ENCODE measurements at regions of chr6 and their contacts with region 1.

Region 1: DNA sequence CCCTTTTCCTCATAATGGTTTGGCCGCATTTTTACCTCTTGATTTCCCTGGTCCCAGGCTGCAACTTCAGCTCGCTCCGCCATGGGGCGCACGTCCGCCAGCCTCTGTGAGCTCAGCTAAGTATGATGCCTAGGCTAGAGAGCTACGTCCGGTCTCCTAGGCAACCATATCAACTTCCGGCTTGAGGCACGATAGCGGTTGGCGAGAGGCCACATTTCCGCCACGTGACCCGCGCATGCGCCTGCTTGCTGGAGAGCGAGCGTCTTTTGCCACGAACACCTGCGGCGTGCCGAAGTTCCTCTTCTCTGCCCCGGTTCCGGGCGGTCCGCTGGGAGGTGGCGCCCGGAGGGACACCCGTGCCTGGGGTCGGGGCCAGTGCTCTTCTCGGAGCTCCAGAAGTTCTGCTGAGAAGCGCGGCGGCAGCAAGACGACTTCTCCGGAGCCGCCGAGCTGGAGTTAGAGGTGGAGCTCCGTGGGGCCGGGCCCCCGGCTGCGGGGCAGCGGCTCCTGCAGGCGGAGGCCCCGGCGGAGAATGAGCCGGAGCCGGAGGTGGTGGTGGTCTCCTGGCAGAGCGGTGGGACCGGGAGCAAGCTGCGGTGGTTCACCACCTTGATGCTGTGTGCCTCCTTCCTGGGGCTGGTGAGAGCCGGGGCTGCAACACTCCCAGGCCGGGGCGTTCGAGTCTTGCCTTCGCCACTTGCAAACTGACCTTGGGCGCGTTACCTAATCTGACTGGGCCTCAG is 172.0 kb downstream of the SLC16A10 start:
- DNase-seq: peak; percentile 99 to 100
- ATAC-seq: peak; percentile 94 to 100 (median 97)
- H3K4me3 ChIP-seq: peak overlapping the region; percentile 70
- H3K4me3 Mint-ChIP-seq: peak overlapping the region; percentile 84
- H3K27ac ChIP-seq: peak overlapping the region; percentile 91
- H3K27ac Mint-ChIP-seq: peak overlapping the region; percentile 86 to 87
- H3K4me1 ChIP-seq: peaks cover 17% of the 10 kb centered on the region
- H3K4me1 Mint-ChIP-seq: peaks cover 9 to 20% of the 10 kb centered on the region in 2 donors
- H3K27me3 ChIP-seq: no peaks in the 10 kb centered on the region
- H3K27me3 Mint-ChIP-seq: peaks cover 4 to 8% of the 10 kb centered on the region in 2 donors
- CTCF ChIP-seq: peak; percentile 81

Region 2: GRCh38 chr6:110999634-111000270 is 259.5 kb before region 1 on chr6:
- intact Hi-C with region 1: no loop called
- DNase-seq: peak in 1 of 2 donors; percentile 63
- ATAC-seq: no peak
- H3K4me3 ChIP-seq: no peak overlapping the region
- H3K4me3 Mint-ChIP-seq: no peak overlapping the region
- H3K27ac ChIP-seq: no peak overlapping the region
- H3K27ac Mint-ChIP-seq: peak overlapping the region in 1 of 2 donors; percentile 15
- H3K4me1 ChIP-seq: no peaks in the 10 kb centered on the region
- H3K4me1 Mint-ChIP-seq: no peaks in the 10 kb centered on the region
- H3K27me3 ChIP-seq: no peaks in the 10 kb centered on the region
- H3K27me3 Mint-ChIP-seq: no peaks in the 10 kb centered on the region
- CTCF ChIP-seq: peak; percentile 31

Region 3: DNA sequence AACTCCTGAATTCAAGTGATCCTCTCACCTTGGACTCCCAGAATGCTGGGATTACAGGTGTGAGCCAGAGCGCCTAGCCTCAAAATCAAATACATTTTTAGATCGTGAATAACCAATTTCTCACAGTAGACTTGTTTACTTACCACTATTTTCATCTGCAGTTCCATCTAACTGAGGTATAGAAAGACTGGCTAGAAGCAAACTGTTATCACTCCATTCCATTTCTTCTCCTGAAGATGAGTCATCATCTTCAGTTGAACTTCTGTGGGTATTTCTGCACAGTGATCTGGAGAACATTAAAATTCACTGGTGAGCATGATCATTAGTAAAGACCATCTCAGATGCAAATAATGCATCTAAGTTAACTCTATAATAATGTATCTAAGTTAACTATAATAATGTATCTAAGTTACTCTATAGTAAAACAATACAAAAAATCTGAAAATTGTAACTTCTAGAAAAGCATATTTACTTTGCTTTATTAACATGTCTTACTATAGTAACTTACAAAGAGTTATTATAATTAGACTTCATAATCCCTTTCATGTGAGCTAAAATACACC is 118.4 kb after region 1 on chr6:
- intact Hi-C with region 1: no loop called
- DNase-seq: no peak
- ATAC-seq: no peak
- H3K4me3 ChIP-seq: no peak overlapping the region
- H3K4me3 Mint-ChIP-seq: no peak overlapping the region
- H3K27ac ChIP-seq: no peak overlapping the region
- H3K27ac Mint-ChIP-seq: no peak overlapping the region
- H3K4me1 ChIP-seq: no peaks in the 10 kb centered on the region
- H3K4me1 Mint-ChIP-seq: no peaks in the 10 kb centered on the region
- H3K27me3 ChIP-seq: no peaks in the 10 kb centered on the region
- H3K27me3 Mint-ChIP-seq: no peaks in the 10 kb centered on the region
- CTCF ChIP-seq: no peak

Region 4: GRCh38 chr6:111483736-111484632 is 224.7 kb after region 1 on chr6:
- intact Hi-C with region 1: loop called (anchors 1 kb)
- DNase-seq: peak in 1 of 2 donors; percentile 92
- ATAC-seq: peak; percentile 34 to 82 (median 61)
- H3K4me3 ChIP-seq: peak overlapping the region; percentile 90
- H3K4me3 Mint-ChIP-seq: peak overlapping the region; percentile 96
- H3K27ac ChIP-seq: peak overlapping the region; percentile 97
- H3K27ac Mint-ChIP-seq: peak overlapping the region; percentile 96 to 98
- H3K4me1 ChIP-seq: peaks cover 9% of the 10 kb centered on the region
- H3K4me1 Mint-ChIP-seq: peaks cover 44 to 45% of the 10 kb centered on the region in 2 donors
- H3K27me3 ChIP-seq: no peaks in the 10 kb centered on the region
- H3K27me3 Mint-ChIP-seq: no peaks in the 10 kb centered on the region
- CTCF ChIP-seq: no peak

Region 5: DNA sequence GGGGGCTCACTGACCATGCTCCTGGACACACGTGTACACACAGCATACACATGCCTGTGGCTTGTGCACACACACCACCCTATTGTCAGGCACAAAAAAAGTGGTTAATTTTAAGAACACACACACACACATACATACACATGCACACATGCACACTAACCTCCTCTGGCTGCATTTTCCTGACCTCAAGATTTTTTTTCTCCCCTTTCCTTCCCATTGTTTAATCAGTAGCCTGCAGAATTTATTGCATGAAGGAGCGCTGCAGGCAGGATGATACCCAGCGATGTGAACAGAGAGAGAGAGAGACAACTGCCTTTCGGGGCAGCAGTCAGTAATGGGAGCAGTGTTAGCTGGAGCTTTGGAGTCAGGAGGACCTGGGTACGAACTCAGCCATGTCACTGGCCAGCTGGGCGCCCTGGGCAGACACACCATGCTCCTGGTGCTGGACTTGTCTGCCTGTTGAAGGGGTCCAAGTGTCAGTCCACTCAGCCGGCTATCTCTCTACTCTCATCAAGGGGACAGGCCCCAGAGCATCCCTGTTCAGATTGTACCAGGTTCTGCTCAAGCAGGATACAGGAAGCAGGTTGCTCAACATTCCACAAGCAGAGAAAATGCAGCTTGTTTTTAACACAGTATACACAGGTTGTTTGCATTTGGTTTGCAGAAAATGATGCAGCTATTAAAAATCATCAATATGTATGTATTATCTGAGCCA is 347.5 kb after region 1 on chr6:
- intact Hi-C with region 1: loop called (anchors 2 kb)
- DNase-seq: peak in 1 of 2 donors; percentile 23
- ATAC-seq: no peak
- H3K4me3 ChIP-seq: peak overlapping the region; percentile 48
- H3K4me3 Mint-ChIP-seq: peak overlapping the region; percentile 99
- H3K27ac ChIP-seq: no peak overlapping the region
- H3K27ac Mint-ChIP-seq: peak overlapping the region; percentile 87 to 98
- H3K4me1 ChIP-seq: peaks cover 19% of the 10 kb centered on the region
- H3K4me1 Mint-ChIP-seq: peaks cover 32 to 41% of the 10 kb centered on the region in 2 donors
- H3K27me3 ChIP-seq: no peaks in the 10 kb centered on the region
- H3K27me3 Mint-ChIP-seq: no peaks in the 10 kb centered on the region
- CTCF ChIP-seq: no peak

Region 6: DNA sequence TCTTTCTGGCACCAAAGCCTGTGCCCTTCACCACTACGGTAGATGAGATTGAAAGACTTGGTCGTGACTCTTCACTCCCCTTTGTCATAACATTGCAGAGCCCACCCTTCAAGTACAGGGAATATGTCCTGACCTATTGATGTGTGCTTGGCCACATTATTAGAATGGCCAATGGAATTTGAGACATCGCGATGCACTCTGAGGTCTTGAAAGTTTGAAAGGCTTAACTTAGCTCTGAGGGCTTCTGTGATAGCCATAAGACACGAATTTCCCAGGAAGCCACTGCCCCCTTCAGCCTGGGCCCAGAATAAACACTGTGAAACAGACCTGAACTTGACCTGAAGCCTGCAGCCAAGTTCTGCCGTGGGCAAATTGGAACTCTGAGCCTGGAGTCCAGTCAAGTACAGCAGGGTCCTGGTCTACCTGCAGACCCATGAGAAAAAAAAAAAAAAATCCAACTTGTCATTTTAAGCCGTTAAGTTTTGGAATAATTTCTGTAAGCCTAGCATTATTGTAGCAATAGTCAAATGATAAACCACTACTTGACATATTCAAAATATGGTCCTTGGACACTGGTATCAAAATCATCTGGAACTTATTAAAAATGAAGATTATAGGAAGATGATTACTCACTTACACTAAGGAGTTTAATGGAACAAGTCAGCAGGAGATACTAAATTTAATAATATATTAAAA is 383.4 kb after region 1 on chr6:
- intact Hi-C with region 1: loop called (anchors 10 kb)
- DNase-seq: peak in 1 of 2 donors; percentile 45
- ATAC-seq: peak; percentile 51 to 70 (median 54)
- H3K4me3 ChIP-seq: no peak overlapping the region
- H3K4me3 Mint-ChIP-seq: no peak overlapping the region
- H3K27ac ChIP-seq: no peak overlapping the region
- H3K27ac Mint-ChIP-seq: no peak overlapping the region
- H3K4me1 ChIP-seq: no peaks in the 10 kb centered on the region
- H3K4me1 Mint-ChIP-seq: no peaks in the 10 kb centered on the region
- H3K27me3 ChIP-seq: no peaks in the 10 kb centered on the region
- H3K27me3 Mint-ChIP-seq: no peaks in the 10 kb centered on the region
- CTCF ChIP-seq: no peak

Region 7: DNA sequence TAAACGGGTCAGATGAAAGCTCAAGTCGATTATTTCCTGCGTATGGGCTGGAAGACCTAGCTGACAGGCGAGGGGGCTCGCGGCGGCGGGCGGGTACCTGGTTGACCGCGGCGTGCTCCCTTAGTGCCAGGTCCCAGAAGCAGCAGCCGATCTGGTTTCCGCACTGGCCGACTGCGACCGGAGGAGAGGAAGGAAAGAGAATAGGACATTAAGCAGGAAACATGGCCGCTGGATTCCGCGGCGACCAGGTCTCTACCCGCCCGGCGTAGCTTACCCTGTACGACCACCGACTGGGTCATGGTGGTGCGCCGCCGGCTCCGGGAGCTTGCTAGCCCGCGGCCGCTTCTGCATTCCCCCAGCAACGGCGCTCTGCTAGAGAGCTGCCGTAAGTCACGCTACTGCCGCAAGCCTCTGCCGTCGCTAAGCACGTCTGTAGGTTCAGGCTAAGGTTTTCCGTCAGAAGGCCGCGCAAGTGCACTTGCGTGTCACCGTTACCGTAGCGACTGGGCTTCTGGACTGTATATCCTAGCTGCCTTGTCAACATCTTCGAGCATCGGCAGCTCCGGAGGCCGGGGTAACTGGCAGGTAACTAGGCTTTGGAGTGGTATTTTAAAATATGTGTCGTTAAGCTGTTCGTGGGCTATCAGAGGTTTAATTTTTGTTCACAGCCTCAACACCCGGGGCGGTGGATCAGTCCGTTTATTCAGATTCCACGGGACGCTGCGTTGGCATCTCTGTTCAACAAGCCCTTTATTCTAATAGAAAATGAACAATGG is 828.1 kb after region 1 on chr6 and contains the starts of genes FAM229B and TUBE1:
- intact Hi-C with region 1: loop called (anchors 1 kb)
- DNase-seq: peak; percentile 82 to 97
- ATAC-seq: peak; percentile 95 to 99 (median 96)
- H3K4me3 ChIP-seq: peak within 1 kb of the TSS; percentile 86
- H3K4me3 Mint-ChIP-seq: no peak within 1 kb of the TSS
- H3K27ac ChIP-seq: peak within 1 kb of the TSS; percentile 90
- H3K27ac Mint-ChIP-seq: no peak within 1 kb of the TSS
- H3K4me1 ChIP-seq: no peaks in the 10 kb centered on the region
- H3K4me1 Mint-ChIP-seq: peaks cover 0 to 5% of the 10 kb centered on the region in 2 donors
- H3K27me3 ChIP-seq: peaks cover 20% of the 10 kb centered on the region
- H3K27me3 Mint-ChIP-seq: peaks cover 26 to 34% of the 10 kb centered on the region in 2 donors
- CTCF ChIP-seq: no peak
- total RNA-seq, gene FAM229B: 0.97 to 1.1 (median 0.99) TPM
- total RNA-seq, gene TUBE1: 15.6 to 31.2 (median 23.7) TPM

Measured in natural killer cell (primary cell).